Gastrocnemius medialis (tissue), 4 donors: ENCODE measurements at regions of chr3 and their contacts with region 1.

Region 1: GRCh38 chr3:9946112-9947024 is 5.8 kb downstream of the PRRT3 start:
- DNase-seq: peak; percentile 67 to 81
- ATAC-seq: peak; percentile 73 to 76
- H3K4me3 ChIP-seq: peak overlapping the region; percentile 62 to 87 (median 80)
- H3K27ac ChIP-seq: peak overlapping the region; percentile 79 to 92 (median 84)
- H3K4me1 ChIP-seq: peaks cover 7 to 16% of the 10 kb centered on the region in 2 donors
- H3K27me3 ChIP-seq: no peaks in the 10 kb centered on the region
- CTCF ChIP-seq: peak; percentile 59 to 78 (median 66)
- POLR2A ChIP-seq: peak; percentile 21 to 41

Region 2: GRCh38 chr3:9976721-9977709 is 30.6 kb after region 1 on chr3:
- in situ Hi-C with region 1: no loop called
- intact Hi-C with region 1: loop called (anchors 2 kb)
- DNase-seq: peak; percentile 83 to 93
- ATAC-seq: peak; percentile 98 to 99
- H3K4me3 ChIP-seq: peak overlapping the region; percentile 23 to 56 (median 50)
- H3K27ac ChIP-seq: peak overlapping the region; percentile 89 to 96 (median 90)
- H3K4me1 ChIP-seq: peaks cover 36 to 54% of the 10 kb centered on the region in 2 donors
- H3K27me3 ChIP-seq: no peaks in the 10 kb centered on the region
- CTCF ChIP-seq: no peak
- POLR2A ChIP-seq: peak; percentile 36 to 37

Region 3: DNA sequence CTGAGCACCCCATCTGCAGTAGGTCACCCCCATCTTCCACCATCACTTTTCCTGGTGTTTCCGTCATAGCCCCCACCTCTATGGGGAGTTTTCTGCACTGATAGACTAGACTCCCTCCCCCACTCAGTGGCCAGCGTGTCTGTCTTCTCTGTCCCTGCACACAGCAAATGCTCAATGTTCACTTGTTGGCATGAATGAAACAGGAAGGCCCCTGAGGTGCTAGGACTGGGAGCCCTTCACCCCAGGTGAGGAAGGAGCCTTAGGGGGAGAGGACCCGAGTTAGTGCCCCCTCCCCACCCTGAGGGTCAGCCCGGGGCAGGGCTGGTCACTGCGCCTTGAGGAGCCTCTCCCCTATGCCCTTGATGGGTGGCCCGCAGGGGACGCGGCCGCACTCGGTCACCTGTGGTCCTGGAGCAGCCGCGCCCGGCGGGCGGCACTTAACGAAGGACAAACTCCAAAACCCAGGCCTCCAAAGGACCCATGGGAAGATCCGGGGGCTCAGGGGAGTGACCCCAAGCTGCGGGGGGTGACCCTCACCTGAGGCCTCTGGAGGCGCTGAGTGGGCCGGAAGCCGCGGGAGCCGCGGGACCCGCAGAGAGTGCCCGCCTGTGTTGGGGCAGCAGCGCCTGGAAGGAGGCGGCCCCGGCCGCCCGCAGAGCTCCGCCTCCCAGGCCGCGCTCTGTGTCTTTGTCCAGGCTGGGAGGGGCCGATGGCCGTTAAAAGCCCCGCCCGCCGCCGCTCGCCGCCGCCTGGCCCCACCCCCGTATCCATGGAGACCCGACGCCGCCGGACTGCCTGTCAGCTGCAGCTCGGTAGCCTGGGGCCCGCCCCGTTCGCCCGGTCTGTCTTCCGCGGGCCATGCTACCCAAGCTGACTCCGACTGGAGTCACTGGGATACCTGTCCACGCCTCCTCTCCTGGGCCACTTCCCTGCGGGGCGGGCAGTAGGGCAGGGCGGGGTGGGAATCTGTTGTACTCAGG is 64.4 kb after region 1 on chr3:
- in situ Hi-C with region 1: no loop called
- intact Hi-C with region 1: loop called (anchors 2 kb)
- DNase-seq: peak; percentile 93 to 96
- ATAC-seq: peak; percentile 73 to 79
- H3K4me3 ChIP-seq: peak overlapping the region; percentile 60 to 87 (median 78)
- H3K27ac ChIP-seq: peak overlapping the region; percentile 53 to 79 (median 76)
- H3K4me1 ChIP-seq: peaks cover 32 to 44% of the 10 kb centered on the region in 2 donors
- H3K27me3 ChIP-seq: no peaks in the 10 kb centered on the region
- CTCF ChIP-seq: no peak
- POLR2A ChIP-seq: peak; percentile 71 to 74

Region 4: GRCh38 chr3:10026084-10026890 is 79.9 kb after region 1 on chr3 and contains the start of gene FANCD2:
- in situ Hi-C with region 1: no loop called
- intact Hi-C with region 1: loop called (anchors 5 kb)
- DNase-seq: peak; percentile 60 to 82
- ATAC-seq: peak; percentile 94 to 95
- H3K4me3 ChIP-seq: peak within 1 kb of the TSS; percentile 63 to 90 (median 80)
- H3K27ac ChIP-seq: peak within 1 kb of the TSS; percentile 78 to 82 (median 80)
- H3K4me1 ChIP-seq: peaks cover 17 to 20% of the 10 kb centered on the region in 2 donors
- H3K27me3 ChIP-seq: no peaks in the 10 kb centered on the region
- CTCF ChIP-seq: no peak
- POLR2A ChIP-seq: peak; percentile 67 to 76
- total RNA-seq, gene FANCD2: 0.46 to 1.3 (median 0.58) TPM in 3 of 4 donors, not detected in the other